Activated CD4-positive, alpha-beta T cell treated with anti-CD3 and anti-CD28 coated beads, Interleukin-2, amount 10 ng/mL, durations not matched to agents 7 days and 5 days (primary cell): ENCODE measurements at regions of chr1 and their contacts with region 1.

Region 1: GRCh38 chr1:110338886-110339406 is at the start of gene RBM15:
- DNase-seq: peak; percentile 99
- H3K4me3 Mint-ChIP-seq: no peak within 1 kb of the TSS
- H3K27ac Mint-ChIP-seq: no peak within 1 kb of the TSS
- H3K4me1 Mint-ChIP-seq: peaks cover 59% of the 10 kb centered on the region
- H3K27me3 Mint-ChIP-seq: no peaks in the 10 kb centered on the region
- total RNA-seq, gene RBM15: 69.9 to 71.2 TPM

Region 2: DNA sequence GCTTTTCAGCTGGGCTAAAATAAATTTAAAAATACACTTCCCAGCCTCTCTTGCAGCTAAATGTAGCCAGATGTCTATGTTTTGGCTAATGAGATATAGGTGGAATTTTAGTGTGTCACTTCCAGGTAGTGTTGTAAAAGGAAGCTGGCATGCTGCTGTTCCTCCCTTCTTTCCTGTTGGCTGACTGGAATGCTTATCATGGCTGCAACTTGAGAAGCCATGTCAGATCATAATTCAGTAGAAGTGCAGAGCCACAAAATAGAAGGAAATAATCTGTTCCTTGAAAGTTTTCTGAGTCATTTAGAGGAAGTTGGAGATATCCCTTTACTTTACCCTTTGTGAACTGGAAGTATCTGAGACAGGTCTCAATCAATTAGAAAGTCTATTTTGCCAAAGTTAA is 10.7 kb before region 1 on chr1:
- CTCF ChIA-PET with region 1: interaction called, 15 read pairs
- POLR2A ChIA-PET with region 1: no interaction called
- DNase-seq: no peak
- H3K4me3 Mint-ChIP-seq: no peak overlapping the region
- H3K27ac Mint-ChIP-seq: no peak overlapping the region
- H3K4me1 Mint-ChIP-seq: no peaks in the 10 kb centered on the region
- H3K27me3 Mint-ChIP-seq: no peaks in the 10 kb centered on the region

Region 3: DNA sequence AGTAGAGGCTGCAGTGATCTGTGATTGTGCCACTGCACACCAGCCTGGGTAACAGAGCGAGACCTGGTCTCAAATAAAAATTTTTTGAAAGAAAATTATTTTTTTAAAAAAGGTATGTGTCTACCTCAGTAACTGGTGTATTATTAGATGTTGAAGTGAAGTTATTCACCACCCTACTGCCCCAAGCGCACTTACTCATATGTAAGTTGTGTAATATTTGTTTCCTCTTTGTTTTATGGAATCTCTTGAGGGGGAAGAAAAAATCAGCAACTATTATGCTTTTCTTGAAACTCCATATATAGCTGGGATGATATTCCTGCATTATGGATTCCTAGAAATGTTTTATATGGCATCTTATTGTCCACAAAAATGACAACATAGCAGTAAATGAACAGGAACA is 21.5 kb after region 1 on chr1:
- CTCF ChIA-PET with region 1: interaction called, 19 read pairs
- POLR2A ChIA-PET with region 1: no interaction called
- DNase-seq: no peak
- H3K4me3 Mint-ChIP-seq: no peak overlapping the region
- H3K27ac Mint-ChIP-seq: no peak overlapping the region
- H3K4me1 Mint-ChIP-seq: peaks cover 16% of the 10 kb centered on the region
- H3K27me3 Mint-ChIP-seq: no peaks in the 10 kb centered on the region

Region 4: DNA sequence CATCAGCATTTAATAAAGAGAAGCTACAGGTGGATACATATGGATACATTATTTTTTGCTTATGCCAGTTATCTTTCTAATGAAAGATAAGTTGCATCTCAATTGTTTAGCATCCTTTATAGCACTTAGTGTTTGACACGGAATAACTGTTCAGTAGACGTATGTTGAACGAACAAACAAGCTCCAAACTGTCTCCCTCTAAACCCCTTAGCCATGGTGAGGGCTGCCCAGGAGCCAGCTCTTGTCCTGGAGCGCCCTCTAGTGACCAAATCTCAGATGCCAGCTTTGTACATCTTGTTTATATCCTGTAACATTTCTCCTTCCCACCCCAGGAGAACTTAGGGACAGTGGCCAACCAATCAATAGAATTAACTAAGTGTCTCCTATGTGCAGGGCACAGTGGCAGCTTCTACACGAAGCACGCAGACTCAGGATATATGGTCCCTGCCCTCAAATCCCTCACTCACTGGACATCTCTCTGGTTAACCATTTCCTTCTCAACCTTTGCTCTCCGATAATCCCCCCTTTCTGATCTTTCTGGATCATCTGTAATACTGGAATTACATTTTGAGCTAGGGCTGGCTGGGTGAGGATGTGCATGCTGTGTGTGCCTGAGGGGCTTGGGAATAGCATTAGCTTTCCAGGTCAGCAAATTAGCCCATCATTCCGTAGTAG is 157.1 kb after region 1 on chr1:
- CTCF ChIA-PET with region 1: interaction called, 10 read pairs
- POLR2A ChIA-PET with region 1: no interaction called
- DNase-seq: peak; percentile 86
- H3K4me3 Mint-ChIP-seq: no peak overlapping the region
- H3K27ac Mint-ChIP-seq: no peak overlapping the region
- H3K4me1 Mint-ChIP-seq: peaks cover 4% of the 10 kb centered on the region
- H3K27me3 Mint-ChIP-seq: no peaks in the 10 kb centered on the region